ENCODE measurements at regions of chr12 and their contacts with region 1.

Region 1: GRCh38 chr12:13278249-13278787 is 81.8 kb downstream of the EMP1 start:
- DNase-seq: peak; percentile 72
- H3K4me3 ChIP-seq: no peak overlapping the region
- H3K27ac ChIP-seq: no peak overlapping the region
- H3K4me1 ChIP-seq: no peaks in the 10 kb centered on the region
- H3K27me3 ChIP-seq: peaks cover 35 to 48% of the 10 kb centered on the region in 2 experiments
- CTCF ChIP-seq: peak; percentile 99
- POLR2A ChIP-seq: no peak

Region 2: DNA sequence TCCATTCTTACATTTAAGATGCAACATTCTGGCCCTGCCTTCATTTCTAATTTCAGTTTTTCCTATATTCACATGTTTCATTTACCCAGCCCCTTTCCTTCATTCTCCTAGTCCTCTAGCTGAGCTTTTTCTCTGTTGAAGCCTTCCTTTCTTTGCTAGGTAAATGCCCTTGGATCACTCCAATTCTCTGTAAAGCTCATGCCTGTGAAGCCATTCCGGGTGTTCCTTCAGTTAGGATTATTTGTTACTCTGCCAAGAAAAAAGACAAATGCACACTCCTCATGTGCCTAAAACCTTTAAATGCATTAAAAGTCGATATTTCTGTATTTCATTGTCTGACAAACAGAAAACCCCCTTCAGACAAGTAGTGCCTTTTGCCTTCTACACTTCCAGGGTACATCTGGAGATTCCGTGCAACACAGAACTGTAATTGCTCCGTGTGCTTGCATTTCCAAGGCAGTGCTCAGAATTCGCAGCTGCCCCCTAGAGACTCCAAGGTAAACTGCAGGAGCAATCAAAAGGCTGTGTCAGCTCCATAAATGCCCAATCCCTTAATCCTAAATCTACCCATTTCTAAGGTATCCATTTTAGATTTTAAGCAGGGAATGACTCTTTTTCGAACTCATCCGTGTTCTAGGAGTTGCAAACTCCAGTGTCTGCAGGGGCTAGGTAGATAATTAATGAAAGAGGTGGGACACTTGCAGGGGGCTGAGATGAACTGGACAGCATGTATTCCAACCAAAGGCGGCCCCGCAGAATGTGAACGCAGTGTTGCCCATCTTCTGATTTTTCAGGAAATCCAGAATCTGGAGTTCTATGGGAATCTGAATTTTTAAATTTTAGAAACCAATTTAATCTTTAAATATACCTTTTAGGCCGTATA is 382.9 kb after region 1 on chr12:
- CTCF ChIA-PET with region 1: interaction called, 8 read pairs
- POLR2A ChIA-PET with region 1: no interaction called
- dilution Hi-C with region 1: no loop called
- intact Hi-C with region 1: loop called (anchors 1 kb)
- DNase-seq: peak; percentile 44
- H3K4me3 ChIP-seq: no peak overlapping the region
- H3K27ac ChIP-seq: no peak overlapping the region
- H3K4me1 ChIP-seq: no peaks in the 10 kb centered on the region
- H3K27me3 ChIP-seq: peaks cover 0 to 4% of the 10 kb centered on the region in 2 experiments
- CTCF ChIP-seq: peak; percentile 63 to 80
- POLR2A ChIP-seq: no peak

Measured in endothelial cell of umbilical vein (primary cell).